ENCODE measurements at regions of chr1 and their contacts with region 1.

Region 1: DNA sequence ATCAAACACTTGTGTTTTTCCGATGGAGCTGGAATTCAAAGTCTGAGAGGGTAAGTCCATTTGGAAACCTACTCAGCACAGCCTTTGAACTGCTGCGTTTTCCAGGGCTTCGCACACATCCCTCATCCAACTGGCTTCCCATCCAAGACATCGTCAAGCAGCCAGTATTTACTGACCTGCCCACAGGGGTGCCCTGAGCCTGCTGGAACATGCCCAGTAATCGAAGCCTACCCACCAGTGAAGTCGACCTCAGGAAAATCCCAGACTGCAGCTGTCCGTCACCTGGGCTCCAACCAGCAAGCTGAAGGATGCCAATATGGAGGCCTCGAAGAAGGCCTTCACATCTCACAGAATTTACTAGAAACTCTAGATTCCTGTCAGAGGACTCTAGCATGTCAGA is 261.6 kb downstream of the PLPP3 start:
- DNase-seq: no peak
- H3K4me3 ChIP-seq: no peak overlapping the region
- CTCF ChIP-seq: no peak

Region 2: DNA sequence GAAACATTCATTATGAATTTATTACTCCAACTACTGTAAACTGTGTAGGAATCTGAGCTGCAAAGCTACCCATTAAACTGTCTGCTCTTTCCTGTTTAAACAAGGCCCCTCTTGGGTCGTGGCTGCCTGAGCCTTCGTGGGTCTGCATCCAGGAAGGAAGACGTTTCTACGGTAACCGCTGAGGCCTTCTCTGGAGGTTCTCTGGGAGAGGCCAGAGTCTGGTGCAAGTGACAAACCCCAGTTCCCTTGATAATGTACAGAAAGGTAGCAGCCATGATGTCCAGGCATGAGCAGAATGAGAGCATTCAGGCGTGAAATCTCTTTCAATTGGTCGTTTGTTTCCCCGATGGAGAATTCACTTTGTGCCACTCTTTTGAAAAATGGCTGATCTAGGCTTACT is 88.5 kb before region 1 on chr1:
- in situ Hi-C with region 1: no loop called
- DNase-seq: no peak
- H3K4me3 ChIP-seq: no peak overlapping the region
- CTCF ChIP-seq: no peak

Region 3: GRCh38 chr1:56240400-56240799 is 77.3 kb before region 1 on chr1:
- in situ Hi-C with region 1: no loop called
- DNase-seq: no peak
- H3K4me3 ChIP-seq: no peak overlapping the region
- CTCF ChIP-seq: no peak

Region 4: GRCh38 chr1:56374026-56374974 is 56.6 kb after region 1 on chr1:
- in situ Hi-C with region 1: loop called (anchors 5 kb)
- DNase-seq: no peak
- H3K4me3 ChIP-seq: no peak overlapping the region
- CTCF ChIP-seq: no peak

Measured in astrocyte of the cerebellum (primary cell).